ENCODE measurements at regions of chr3 and their contacts with region 1.

Region 1: DNA sequence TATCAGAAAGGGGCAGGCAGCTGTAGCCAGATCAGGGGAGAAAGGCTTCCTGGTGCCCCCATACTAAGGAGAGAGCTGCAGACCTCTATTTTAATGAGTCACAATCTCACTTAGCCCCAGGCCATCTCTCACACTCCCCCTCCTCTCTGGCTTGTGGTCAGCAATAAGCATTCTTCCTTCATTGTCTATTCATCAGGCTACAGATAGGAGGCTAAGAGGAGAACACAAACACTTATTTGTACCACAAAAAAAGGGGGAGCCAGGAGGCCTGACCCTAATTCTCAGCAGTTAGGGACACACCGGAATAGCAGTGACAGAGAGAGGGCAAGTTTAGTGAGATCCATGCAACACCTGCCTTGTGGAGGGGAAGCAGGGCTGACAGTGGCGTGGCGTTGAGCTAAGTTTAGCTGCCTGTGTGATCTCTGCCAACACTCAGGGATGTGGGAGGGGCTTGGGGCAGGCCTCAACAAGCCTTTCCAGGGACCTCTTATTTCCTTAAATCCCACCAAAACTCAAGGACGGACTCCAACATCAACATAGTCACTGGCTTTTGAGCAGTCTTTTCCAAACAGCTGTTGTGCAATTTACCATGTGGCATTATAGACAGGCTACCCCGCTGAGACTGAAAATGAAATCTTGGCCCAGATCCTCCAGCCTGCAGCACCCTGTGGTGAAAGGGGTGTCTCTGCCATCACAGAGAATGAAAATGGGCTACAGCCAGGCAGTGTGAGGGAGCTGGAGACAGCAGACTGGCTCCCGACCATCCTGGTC is 191.9 kb upstream of the TSC22D2 start:
- DNase-seq: peak; percentile 61
- ATAC-seq: peak; percentile 50
- H3K4me3 ChIP-seq: no peak overlapping the region
- H3K27ac ChIP-seq: peak overlapping the region; percentile 49; the same call in 1 of the 2 replicates
- H3K4me1 ChIP-seq: peaks cover 6% of the 10 kb centered on the region
- H3K27me3 ChIP-seq: peaks cover under 1% of the 10 kb centered on the region; the same call in 1 of the 2 replicates
- CTCF ChIP-seq: no peak
- POLR2A ChIP-seq: no peak
- RAD21 ChIP-seq: no peak; the same call in 1 of the 2 replicates

Region 2: DNA sequence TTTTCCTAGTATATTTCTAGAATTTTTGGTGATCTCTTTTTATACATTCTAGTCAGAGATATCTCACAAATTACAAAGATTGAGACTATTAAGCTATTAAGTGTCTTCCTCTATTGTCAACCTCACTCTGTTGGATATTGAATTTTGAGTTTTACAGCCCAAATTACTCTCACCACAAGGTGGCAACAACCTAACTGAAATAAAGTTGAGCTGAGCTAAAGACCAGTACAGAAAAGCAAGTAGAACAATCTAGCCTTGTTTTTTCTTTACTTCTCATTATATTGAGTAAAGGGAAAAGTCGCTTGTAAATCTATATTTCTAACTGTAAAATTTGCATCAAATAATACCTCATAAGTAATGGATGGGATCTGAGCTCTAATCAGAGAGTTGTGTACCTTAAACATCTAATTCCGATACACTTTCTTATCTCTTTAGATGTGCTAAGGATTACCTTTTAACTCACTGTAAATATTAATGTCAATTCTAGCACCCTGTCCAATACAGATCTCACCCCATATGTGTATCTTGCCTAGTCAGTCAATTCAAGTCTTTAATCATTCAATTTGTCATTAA is 450.4 kb before region 1 on chr3:
- CTCF ChIA-PET with region 1: interaction called, 3 read pairs
- POLR2A ChIA-PET with region 1: no interaction called
- dilution Hi-C with region 1: no loop called
- in situ Hi-C with region 1: no loop called
- intact Hi-C with region 1: loop called (anchors 1 kb)
- DNase-seq: peak; percentile 67
- ATAC-seq: peak; percentile 80
- H3K4me3 ChIP-seq: no peak overlapping the region
- H3K27ac ChIP-seq: no peak overlapping the region
- H3K4me1 ChIP-seq: no peaks in the 10 kb centered on the region
- H3K27me3 ChIP-seq: peaks cover 39% of the 10 kb centered on the region
- CTCF ChIP-seq: peak; percentile 74
- POLR2A ChIP-seq: no peak
- RAD21 ChIP-seq: peak; percentile 67

Region 3: GRCh38 chr3:149879872-149880271 is 336.4 kb before region 1 on chr3:
- CTCF ChIA-PET with region 1: interaction called, 11 read pairs
- POLR2A ChIA-PET with region 1: no interaction called
- dilution Hi-C with region 1: no loop called
- in situ Hi-C with region 1: no loop called
- intact Hi-C with region 1: loop called (anchors 1 kb)
- DNase-seq: peak; percentile 68
- ATAC-seq: peak; percentile 98
- H3K4me3 ChIP-seq: no peak overlapping the region
- H3K27ac ChIP-seq: no peak overlapping the region
- H3K4me1 ChIP-seq: no peaks in the 10 kb centered on the region
- H3K27me3 ChIP-seq: no peaks in the 10 kb centered on the region
- CTCF ChIP-seq: peak; percentile 62
- POLR2A ChIP-seq: no peak
- RAD21 ChIP-seq: peak; percentile 55

Region 4: GRCh38 chr3:150183678-150184425 is 32.4 kb before region 1 on chr3:
- CTCF ChIA-PET with region 1: interaction called, 10 read pairs
- POLR2A ChIA-PET with region 1: no interaction called
- dilution Hi-C with region 1: no loop called
- in situ Hi-C with region 1: no loop called
- intact Hi-C with region 1: loop called (anchors 2 kb)
- DNase-seq: peak; percentile 83
- ATAC-seq: peak; percentile 97
- H3K4me3 ChIP-seq: peak overlapping the region; percentile 32
- H3K27ac ChIP-seq: peak overlapping the region; percentile 36; the same call in 1 of the 2 replicates
- H3K4me1 ChIP-seq: peaks cover 2% of the 10 kb centered on the region; the same call in 1 of the 2 replicates
- H3K27me3 ChIP-seq: no peaks in the 10 kb centered on the region
- CTCF ChIP-seq: peak; percentile 80
- POLR2A ChIP-seq: no peak
- RAD21 ChIP-seq: peak; percentile 91

Region 5: GRCh38 chr3:150319904-150320303 is 103.7 kb after region 1 on chr3:
- CTCF ChIA-PET with region 1: no interaction called
- POLR2A ChIA-PET with region 1: no interaction called
- dilution Hi-C with region 1: no loop called
- in situ Hi-C with region 1: no loop called
- intact Hi-C with region 1: no loop called
- DNase-seq: peak; percentile 96
- ATAC-seq: peak; percentile 94
- H3K4me3 ChIP-seq: no peak overlapping the region
- H3K27ac ChIP-seq: no peak overlapping the region
- H3K4me1 ChIP-seq: peaks cover 7% of the 10 kb centered on the region
- H3K27me3 ChIP-seq: no peaks in the 10 kb centered on the region
- CTCF ChIP-seq: no peak
- POLR2A ChIP-seq: no peak
- RAD21 ChIP-seq: no peak